Endothelial cell of umbilical vein (primary cell): ENCODE measurements at regions of chr19 and their contacts with region 1.

Region 1: GRCh38 chr19:30649934-30650614 is 277.9 kb downstream of the ZNF536 start:
- DNase-seq: peak; percentile 48
- H3K4me3 ChIP-seq: no peak overlapping the region
- H3K27ac ChIP-seq: no peak overlapping the region
- H3K4me1 ChIP-seq: no peaks in the 10 kb centered on the region
- H3K27me3 ChIP-seq: no peaks in the 10 kb centered on the region
- CTCF ChIP-seq: peak; percentile 66 to 70
- POLR2A ChIP-seq: no peak

Region 2: DNA sequence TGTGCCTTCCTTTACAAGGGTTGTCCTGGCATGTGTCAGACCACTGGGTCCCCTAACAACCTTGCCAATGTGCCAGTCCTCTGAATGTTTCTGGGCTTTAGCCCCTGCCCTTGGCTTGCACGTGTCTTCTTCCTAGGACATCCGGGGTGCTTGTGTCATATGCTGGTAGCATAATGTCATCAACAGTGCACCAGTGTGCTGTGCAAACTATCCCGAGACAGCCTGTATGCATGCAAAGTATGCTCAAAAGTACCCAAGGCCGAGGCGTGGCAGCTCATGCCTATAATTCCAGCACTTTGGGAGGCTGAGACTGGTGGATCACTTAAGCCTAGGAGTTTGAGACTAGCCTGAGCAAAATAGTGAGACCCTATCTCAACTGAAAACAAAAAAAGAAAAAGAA is 914.3 kb before region 1 on chr19:
- CTCF ChIA-PET with region 1: interaction called, 11 read pairs
- POLR2A ChIA-PET with region 1: no interaction called
- dilution Hi-C with region 1: loop called (anchors 25 kb)
- intact Hi-C with region 1: loop called (anchors 1 kb)
- DNase-seq: no peak
- H3K4me3 ChIP-seq: no peak overlapping the region
- H3K27ac ChIP-seq: no peak overlapping the region
- H3K4me1 ChIP-seq: no peaks in the 10 kb centered on the region
- H3K27me3 ChIP-seq: no peaks in the 10 kb centered on the region
- CTCF ChIP-seq: no peak
- POLR2A ChIP-seq: no peak

Region 3: GRCh38 chr19:29745253-29745652 is 904.8 kb before region 1 on chr19:
- CTCF ChIA-PET with region 1: no interaction called
- POLR2A ChIA-PET with region 1: no interaction called
- dilution Hi-C with region 1: loop called (anchors 25 kb)
- intact Hi-C with region 1: no loop called
- DNase-seq: no peak
- H3K4me3 ChIP-seq: no peak overlapping the region
- H3K27ac ChIP-seq: no peak overlapping the region
- H3K4me1 ChIP-seq: no peaks in the 10 kb centered on the region
- H3K27me3 ChIP-seq: no peaks in the 10 kb centered on the region
- CTCF ChIP-seq: peak in 1 of 2 donors; percentile 12
- POLR2A ChIP-seq: no peak

Region 4: GRCh38 chr19:29771708-29772414 is 878.2 kb before region 1 on chr19:
- CTCF ChIA-PET with region 1: interaction called, 6 read pairs
- POLR2A ChIA-PET with region 1: no interaction called
- dilution Hi-C with region 1: no loop called
- intact Hi-C with region 1: loop called (anchors 2 kb)
- DNase-seq: peak; percentile 38
- H3K4me3 ChIP-seq: no peak overlapping the region
- H3K27ac ChIP-seq: no peak overlapping the region
- H3K4me1 ChIP-seq: no peaks in the 10 kb centered on the region
- H3K27me3 ChIP-seq: no peaks in the 10 kb centered on the region
- CTCF ChIP-seq: peak; percentile 57 to 82
- POLR2A ChIP-seq: no peak

Region 5: GRCh38 chr19:30227661-30228428 is 422.2 kb before region 1 on chr19:
- CTCF ChIA-PET with region 1: no interaction called
- POLR2A ChIA-PET with region 1: no interaction called
- dilution Hi-C with region 1: no loop called
- intact Hi-C with region 1: loop called (anchors 1 kb)
- DNase-seq: peak; percentile 36
- H3K4me3 ChIP-seq: peak overlapping the region; percentile 15 to 40 (median 40)
- H3K27ac ChIP-seq: no peak overlapping the region
- H3K4me1 ChIP-seq: no peaks in the 10 kb centered on the region
- H3K27me3 ChIP-seq: peaks cover 44 to 68% of the 10 kb centered on the region in 2 experiments
- CTCF ChIP-seq: peak; percentile 27 to 44
- POLR2A ChIP-seq: no peak

Region 6: GRCh38 chr19:30692181-30692811 is 42.2 kb after region 1 on chr19:
- CTCF ChIA-PET with region 1: no interaction called
- POLR2A ChIA-PET with region 1: no interaction called
- dilution Hi-C with region 1: no loop called
- intact Hi-C with region 1: no loop called
- DNase-seq: no peak
- H3K4me3 ChIP-seq: no peak overlapping the region
- H3K27ac ChIP-seq: no peak overlapping the region
- H3K4me1 ChIP-seq: no peaks in the 10 kb centered on the region
- H3K27me3 ChIP-seq: no peaks in the 10 kb centered on the region
- CTCF ChIP-seq: no peak
- POLR2A ChIP-seq: no peak